ENCODE measurements at regions of chr2 and their contacts with region 1.

Region 1: DNA sequence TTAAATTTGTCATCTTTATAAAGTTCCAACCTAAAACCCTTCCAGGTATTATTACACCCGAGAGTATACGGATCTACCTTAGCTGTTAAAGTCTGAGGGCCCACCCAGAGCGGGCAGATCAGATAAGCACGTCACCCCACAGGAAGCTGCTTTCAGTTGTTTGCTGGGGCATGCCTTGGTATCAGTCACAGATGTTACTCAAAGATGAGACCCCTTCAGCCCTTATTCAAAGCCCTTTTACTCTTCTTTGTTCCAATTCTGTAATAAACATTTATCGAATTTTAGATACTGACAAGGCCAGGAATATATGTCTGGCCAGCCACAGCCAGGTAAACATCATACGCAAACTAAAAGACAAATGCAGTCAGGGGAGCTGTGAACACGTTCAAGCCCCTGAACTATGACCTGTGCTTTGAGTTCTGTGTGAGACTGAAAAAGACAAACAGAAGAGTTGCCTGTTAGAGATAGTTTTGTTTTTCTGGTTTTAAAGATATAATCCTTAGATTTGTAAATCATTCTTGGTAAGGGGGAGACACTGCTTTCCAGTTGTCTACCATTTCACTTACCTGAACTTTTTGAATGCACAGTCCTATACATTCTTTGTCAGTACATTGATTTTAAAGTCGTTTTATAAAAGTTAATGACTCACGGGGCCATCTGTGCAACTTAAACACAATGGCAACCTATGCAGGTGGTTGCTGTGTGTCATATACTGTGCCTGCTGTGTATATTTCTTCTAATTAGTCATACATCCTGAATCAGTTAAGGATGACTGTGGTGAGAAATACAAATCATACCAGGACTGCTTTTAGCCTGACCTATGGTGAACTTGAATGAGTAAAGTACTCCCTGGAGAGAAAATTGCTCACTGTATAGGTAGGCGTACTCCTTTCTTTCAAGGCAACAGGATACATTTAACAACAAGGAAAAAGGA is 100.5 kb upstream of the ITPRID2 start:
- DNase-seq: peak; percentile 99
- H3K4me3 ChIP-seq: no peak overlapping the region
- H3K27ac ChIP-seq: peak overlapping the region; percentile 96
- H3K4me1 ChIP-seq: peaks cover 45% of the 10 kb centered on the region
- H3K27me3 ChIP-seq: no peaks in the 10 kb centered on the region
- CTCF ChIP-seq: no peak
- POLR2A ChIP-seq: peak; percentile 72

Region 2: GRCh38 chr2:181780047-181780651 is 10.8 kb before region 1 on chr2:
- CTCF ChIA-PET with region 1: interaction called, 8 read pairs
- POLR2A ChIA-PET with region 1: interaction called, 3 read pairs
- dilution Hi-C with region 1: no loop called
- intact Hi-C with region 1: loop called (anchors 1 kb)
- DNase-seq: peak; percentile 57
- H3K4me3 ChIP-seq: no peak overlapping the region
- H3K27ac ChIP-seq: peak overlapping the region; percentile 13
- H3K4me1 ChIP-seq: peaks cover 54% of the 10 kb centered on the region
- H3K27me3 ChIP-seq: no peaks in the 10 kb centered on the region
- CTCF ChIP-seq: no peak
- POLR2A ChIP-seq: no peak

Region 3: DNA sequence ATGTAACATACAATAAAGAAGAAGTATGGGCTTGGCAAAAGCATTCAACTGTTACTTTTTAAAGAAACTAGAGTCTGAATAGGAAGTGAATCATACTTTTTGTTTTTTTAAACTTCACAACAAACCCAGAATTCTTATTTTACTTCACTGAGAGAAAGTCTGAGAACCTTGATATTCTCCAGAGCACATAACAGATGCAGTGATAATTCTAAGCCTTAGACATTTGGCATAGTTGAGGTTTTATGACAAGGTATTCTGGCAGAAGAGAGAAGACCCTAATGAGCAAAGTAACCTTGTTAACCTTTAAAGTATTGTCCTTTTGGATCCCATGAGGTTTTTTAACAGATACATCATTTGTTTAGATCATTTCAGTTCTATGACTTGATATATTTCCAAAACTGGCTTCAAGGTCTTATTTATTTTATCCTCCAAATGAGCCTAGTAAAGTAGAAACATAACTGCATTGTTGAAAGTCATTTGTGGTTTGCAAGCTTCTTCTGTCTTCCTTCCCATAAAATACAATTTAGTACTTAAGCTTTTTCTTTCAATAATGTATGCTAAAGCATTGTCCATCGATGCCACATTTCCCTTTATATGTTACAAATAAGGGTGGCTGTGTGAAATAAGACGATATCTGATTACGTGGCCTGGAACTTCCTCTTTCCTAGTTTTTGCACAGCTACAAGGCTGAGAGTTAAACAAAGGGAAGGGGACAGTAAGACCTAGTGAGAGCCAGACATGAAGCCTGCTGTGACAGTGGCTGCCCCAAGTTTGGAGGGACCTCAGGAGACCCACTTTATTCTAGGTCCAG is 14.4 kb after region 1 on chr2:
- CTCF ChIA-PET with region 1: interaction called, 3 read pairs
- POLR2A ChIA-PET with region 1: interaction called, 3 read pairs
- dilution Hi-C with region 1: no loop called
- intact Hi-C with region 1: loop called (anchors 1 kb)
- DNase-seq: peak; percentile 91
- H3K4me3 ChIP-seq: peak overlapping the region in 1 of 3 experiments; percentile 22
- H3K27ac ChIP-seq: peak overlapping the region; percentile 85
- H3K4me1 ChIP-seq: peaks cover 37% of the 10 kb centered on the region
- H3K27me3 ChIP-seq: no peaks in the 10 kb centered on the region
- CTCF ChIP-seq: no peak
- POLR2A ChIP-seq: no peak

Region 4: GRCh38 chr2:182422864-182423263 is 631.9 kb after region 1 on chr2:
- CTCF ChIA-PET with region 1: no interaction called
- POLR2A ChIA-PET with region 1: no interaction called
- dilution Hi-C with region 1: no loop called
- intact Hi-C with region 1: no loop called
- DNase-seq: no peak
- H3K4me3 ChIP-seq: no peak overlapping the region
- H3K27ac ChIP-seq: no peak overlapping the region
- H3K4me1 ChIP-seq: no peaks in the 10 kb centered on the region
- H3K27me3 ChIP-seq: no peaks in the 10 kb centered on the region
- CTCF ChIP-seq: no peak
- POLR2A ChIP-seq: no peak